ENCODE measurements at regions of chr12 and their contacts with region 1.

Region 1: GRCh38 chr12:85441740-85442139 is 161.7 kb downstream of the ALX1 start:
- DNase-seq: no peak
- H3K4me3 ChIP-seq: no peak overlapping the region
- H3K4me3 Mint-ChIP-seq: no peak overlapping the region
- H3K27ac Mint-ChIP-seq: peak overlapping the region; percentile 39
- H3K4me1 ChIP-seq: peaks cover 48% of the 10 kb centered on the region
- H3K4me1 Mint-ChIP-seq: peaks cover 51% of the 10 kb centered on the region
- H3K27me3 ChIP-seq: no peaks in the 10 kb centered on the region
- H3K27me3 Mint-ChIP-seq: no peaks in the 10 kb centered on the region
- CTCF ChIP-seq: peak in 1 of 2 experiments; percentile 32

Region 2: DNA sequence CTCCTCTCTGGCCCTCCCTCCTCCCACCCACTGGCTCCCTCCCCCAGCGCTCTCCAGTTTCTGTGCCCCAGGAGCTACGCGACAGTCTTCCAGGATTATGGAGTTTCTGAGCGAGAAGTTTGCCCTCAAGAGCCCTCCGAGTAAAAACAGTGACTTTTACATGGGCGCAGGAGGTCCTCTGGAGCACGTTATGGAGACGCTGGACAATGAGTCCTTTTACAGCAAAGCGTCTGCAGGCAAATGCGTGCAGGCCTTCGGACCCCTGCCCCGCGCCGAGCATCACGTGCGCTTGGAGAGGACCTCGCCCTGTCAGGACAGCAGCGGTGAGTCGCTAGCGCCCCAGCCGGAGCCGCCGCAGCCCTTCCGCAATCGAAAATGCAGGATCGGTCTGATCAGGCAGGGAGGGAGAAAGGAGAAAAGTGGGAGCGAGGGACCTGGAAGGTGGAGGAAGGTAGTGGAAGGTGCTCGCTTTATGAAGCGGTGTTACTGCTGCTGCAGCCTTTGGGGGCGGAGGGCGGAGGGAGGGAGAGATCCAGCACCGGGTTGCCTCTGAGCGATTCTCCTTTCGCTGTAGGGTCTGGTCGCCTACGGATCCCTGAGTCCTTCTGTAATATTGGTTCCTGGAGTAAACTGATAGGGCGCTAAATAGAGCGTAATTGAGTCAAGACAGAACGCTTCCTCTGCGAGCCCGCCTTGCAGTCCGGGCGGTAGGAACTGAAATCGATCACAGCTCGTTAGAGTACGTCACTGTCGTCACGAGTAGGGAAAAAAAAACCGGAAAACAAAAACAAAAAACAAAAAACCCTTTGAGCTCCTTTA is 161.4 kb before region 1 on chr12 and contains the start of gene ALX1:
- CTCF ChIA-PET with region 1: no interaction called
- POLR2A ChIA-PET with region 1: no interaction called
- intact Hi-C with region 1: no loop called
- DNase-seq: peak; percentile 37 to 45
- H3K4me3 ChIP-seq: peak within 1 kb of the TSS; percentile 48
- H3K4me3 Mint-ChIP-seq: peak within 1 kb of the TSS; percentile 73
- H3K27ac Mint-ChIP-seq: no peak within 1 kb of the TSS
- H3K4me1 ChIP-seq: 0 out of 2 replicates have a peak, but pooled peaks cover 8% of the 10 kb centered on the region
- H3K4me1 Mint-ChIP-seq: no peaks in the 10 kb centered on the region
- H3K27me3 ChIP-seq: no peaks in the 10 kb centered on the region
- H3K27me3 Mint-ChIP-seq: peaks cover 10% of the 10 kb centered on the region
- CTCF ChIP-seq: no peak
- total RNA-seq, gene ALX1: not detected in 2 replicates

Region 3: DNA sequence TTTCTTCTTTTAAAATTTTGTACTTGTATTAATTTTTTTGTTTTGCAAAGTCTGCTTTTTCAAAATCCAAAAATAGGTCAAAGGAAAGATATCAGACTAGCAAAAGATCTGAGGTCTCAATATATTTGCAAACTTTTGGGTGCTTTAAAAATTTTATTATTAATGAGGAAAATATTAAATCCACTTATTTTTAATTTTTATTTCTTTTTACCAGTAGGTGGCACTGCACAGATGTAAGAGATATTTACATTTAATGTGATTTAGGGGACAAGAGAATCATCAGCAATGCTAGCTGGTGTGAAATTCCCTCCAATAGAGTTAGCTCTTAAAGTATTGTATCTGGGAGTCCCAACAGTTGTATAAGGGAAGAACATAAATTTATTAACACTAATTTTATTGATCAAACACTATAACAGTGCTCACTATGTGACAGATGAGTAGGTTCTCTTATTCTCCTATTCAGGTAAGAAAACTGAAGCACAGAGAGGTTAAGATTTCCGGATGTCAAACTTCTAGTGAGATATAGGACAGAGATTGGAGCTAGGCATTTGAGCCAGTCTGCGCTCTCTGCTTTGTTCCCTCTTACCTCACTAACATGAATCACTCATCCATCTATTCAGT is 131.2 kb before region 1 on chr12:
- CTCF ChIA-PET with region 1: no interaction called
- POLR2A ChIA-PET with region 1: no interaction called
- intact Hi-C with region 1: no loop called
- DNase-seq: no peak
- H3K4me3 ChIP-seq: no peak overlapping the region
- H3K4me3 Mint-ChIP-seq: no peak overlapping the region
- H3K27ac Mint-ChIP-seq: no peak overlapping the region
- H3K4me1 ChIP-seq: no peaks in the 10 kb centered on the region
- H3K4me1 Mint-ChIP-seq: no peaks in the 10 kb centered on the region
- H3K27me3 ChIP-seq: no peaks in the 10 kb centered on the region
- H3K27me3 Mint-ChIP-seq: no peaks in the 10 kb centered on the region
- CTCF ChIP-seq: peak in 1 of 2 experiments; percentile 59

Region 4: DNA sequence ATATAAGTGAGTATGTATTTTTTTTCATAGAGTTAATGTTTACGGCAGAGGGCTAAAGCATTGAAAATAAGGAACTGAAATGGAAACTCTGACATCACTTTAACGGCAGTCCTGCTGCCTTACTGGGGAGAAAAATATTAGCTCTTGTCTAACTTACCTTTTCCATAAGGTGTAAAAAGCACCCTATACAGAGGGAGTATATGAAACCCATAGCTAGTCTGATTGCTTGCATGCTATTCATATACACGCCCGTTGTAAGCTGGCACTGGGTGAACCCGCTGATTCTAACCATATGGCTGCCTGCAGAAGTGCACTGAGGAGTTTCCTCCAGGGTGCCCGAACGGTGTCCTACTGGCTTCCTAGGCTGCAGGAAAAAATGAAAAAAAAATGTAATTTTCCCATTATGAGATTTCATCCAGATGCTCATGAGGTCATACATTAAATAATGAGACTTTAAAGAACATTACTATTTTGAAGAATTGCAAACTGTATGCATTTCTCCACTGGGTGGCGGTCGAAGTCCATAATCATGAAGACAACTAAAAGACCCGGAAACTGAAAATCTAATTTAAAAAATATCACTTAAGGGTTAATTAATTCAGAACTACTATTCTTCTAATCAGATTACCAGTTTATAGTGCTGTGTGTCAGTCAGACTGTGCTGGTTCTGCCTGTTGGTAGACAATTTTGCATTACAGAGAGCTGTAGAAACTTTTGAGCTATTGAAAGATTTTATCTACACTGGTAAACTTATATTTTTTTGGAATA is 17.0 kb before region 1 on chr12:
- CTCF ChIA-PET with region 1: interaction called, 17 read pairs
- POLR2A ChIA-PET with region 1: no interaction called
- intact Hi-C with region 1: loop called (anchors 1 kb)
- DNase-seq: peak; percentile 46 to 52
- H3K4me3 ChIP-seq: no peak overlapping the region
- H3K4me3 Mint-ChIP-seq: no peak overlapping the region
- H3K27ac Mint-ChIP-seq: no peak overlapping the region
- H3K4me1 ChIP-seq: peaks cover 29% of the 10 kb centered on the region
- H3K4me1 Mint-ChIP-seq: peaks cover 17% of the 10 kb centered on the region
- H3K27me3 ChIP-seq: no peaks in the 10 kb centered on the region
- H3K27me3 Mint-ChIP-seq: no peaks in the 10 kb centered on the region
- CTCF ChIP-seq: peak; percentile 59 to 72

Region 5: DNA sequence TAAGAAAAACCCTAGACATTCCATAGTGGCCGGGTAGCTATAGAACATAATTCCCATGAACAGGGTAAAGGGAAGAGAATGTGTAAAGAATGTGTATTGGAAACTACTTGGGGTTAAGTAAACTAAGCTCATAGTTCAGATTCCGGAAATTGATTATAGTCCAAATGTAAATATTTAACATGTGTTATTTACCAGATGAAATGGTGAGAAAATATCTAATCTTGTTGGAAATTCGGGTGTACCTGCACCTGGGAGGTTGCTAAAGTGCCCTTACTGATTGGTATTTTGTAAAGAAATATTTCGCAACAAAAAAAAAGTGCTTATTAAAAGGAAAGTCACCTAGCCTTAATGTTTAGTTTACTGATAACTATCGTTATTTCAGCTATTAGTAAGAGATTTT is 380.0 kb after region 1 on chr12:
- CTCF ChIA-PET with region 1: no interaction called
- POLR2A ChIA-PET with region 1: no interaction called
- intact Hi-C with region 1: loop called (anchors 1 kb)
- DNase-seq: peak; percentile 45 to 64
- H3K4me3 ChIP-seq: no peak overlapping the region
- H3K4me3 Mint-ChIP-seq: no peak overlapping the region
- H3K27ac Mint-ChIP-seq: no peak overlapping the region
- H3K4me1 ChIP-seq: peaks cover 20% of the 10 kb centered on the region
- H3K4me1 Mint-ChIP-seq: peaks cover 7% of the 10 kb centered on the region
- H3K27me3 ChIP-seq: no peaks in the 10 kb centered on the region; the same call in 1 of the 2 replicates
- H3K27me3 Mint-ChIP-seq: peaks cover 9% of the 10 kb centered on the region
- CTCF ChIP-seq: no peak

Measured in Caco-2 (cell line).